CD4-positive, alpha-beta T cell (primary cell): ENCODE measurements at regions of chr17 and their contacts with region 1.

Region 1: DNA sequence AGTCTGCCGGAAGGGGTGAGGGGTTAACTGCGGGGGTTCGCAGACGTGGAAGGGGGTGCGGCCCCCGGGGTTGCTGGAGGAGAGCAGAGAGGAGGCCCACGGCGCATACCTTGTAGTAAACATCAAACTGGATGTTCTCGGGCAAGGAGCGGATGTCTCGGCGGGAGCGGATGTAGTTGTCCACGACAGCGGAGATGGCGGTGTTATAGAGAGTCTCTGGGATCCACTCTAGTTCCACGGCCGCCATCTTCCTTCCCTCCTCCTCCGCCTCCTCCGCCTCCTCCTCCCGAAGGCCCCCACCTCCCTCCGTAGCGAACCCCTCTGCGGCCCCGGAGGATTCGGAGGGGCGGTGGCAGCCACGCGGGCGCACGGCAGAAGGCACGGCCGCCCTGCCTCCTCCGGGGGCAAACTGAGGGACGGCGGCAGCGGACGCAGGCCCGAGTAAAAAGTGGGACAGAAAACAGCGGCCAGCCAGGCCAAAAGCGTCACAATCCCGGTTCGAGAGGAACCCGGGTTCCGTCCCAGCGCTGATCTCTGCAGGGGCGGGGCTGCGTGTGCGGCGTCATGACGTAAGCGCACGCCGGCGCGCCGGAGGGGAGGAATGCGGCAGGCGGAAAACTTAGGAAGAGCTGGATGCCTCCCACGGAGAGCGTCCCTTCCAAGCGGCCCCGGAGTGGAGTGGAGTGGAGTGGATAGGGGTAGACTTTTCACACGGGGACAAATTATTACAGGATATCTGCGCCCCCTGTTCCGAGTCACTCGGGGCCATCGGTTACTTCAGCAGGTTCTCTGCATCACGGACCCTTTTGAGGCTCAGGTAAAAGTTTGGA is at the start of gene APPBP2:
- DNase-seq: peak; percentile 47 to 89 (median 64)
- ATAC-seq: peak; percentile 84
- H3K4me3 ChIP-seq: peak within 1 kb of the TSS; percentile 93
- H3K4me3 Mint-ChIP-seq: peak within 1 kb of the TSS; percentile 99
- H3K27ac ChIP-seq: peak within 1 kb of the TSS; percentile 93 to 98
- H3K27ac Mint-ChIP-seq: peak within 1 kb of the TSS; percentile 98
- H3K4me1 ChIP-seq: peaks cover 15% of the 10 kb centered on the region
- H3K4me1 Mint-ChIP-seq: peaks cover 58% of the 10 kb centered on the region
- H3K27me3 ChIP-seq: no peaks in the 10 kb centered on the region
- H3K27me3 Mint-ChIP-seq: no peaks in the 10 kb centered on the region
- CTCF ChIP-seq: no peak
- total RNA-seq, gene APPBP2: 18.5 to 18.7 TPM

Region 2: DNA sequence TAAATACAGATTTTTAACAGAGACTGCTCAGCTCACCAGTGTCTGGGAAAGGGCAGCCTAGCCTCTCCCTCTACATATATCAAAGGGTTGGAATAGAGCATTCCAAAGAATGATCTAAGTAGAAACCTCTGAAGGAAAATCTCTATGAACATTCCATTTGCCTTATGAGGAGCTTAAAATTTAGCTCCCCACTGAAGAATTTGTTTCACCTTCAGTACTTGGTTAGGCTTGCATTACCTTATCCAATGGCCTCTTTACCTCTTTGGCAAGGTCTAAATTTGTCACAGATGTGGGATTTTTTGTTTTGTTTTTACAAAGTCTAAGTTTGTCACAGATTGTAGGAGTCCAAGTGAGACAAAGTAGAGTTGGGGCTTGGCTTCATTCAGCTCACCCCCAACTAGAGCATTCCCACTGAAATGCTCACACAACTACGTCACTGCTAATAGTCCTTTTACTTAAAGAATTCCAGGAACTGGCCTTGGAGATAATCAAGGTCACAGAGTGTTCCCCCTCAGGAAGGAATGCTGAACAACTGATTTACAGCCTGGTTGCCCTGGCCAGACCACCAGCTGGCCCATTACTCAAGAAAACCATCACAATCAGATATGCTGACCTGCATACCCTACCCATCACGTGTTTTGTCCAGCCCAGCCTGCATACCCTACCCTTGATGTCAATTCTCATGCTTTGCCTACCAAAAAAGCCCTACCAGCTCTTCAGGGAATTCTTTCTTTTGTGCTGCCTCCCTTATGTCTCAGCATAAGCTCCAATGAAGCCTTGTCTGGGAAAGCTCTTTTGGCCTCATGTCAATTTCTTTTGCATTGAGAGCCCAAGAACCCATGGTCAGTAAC is 47.5 kb after region 1 on chr17:
- CTCF ChIA-PET with region 1: interaction called, 3 read pairs
- POLR2A ChIA-PET with region 1: no interaction called
- intact Hi-C with region 1: loop called in 1 of 2 experiments (anchors 5 kb)
- DNase-seq: no peak
- ATAC-seq: no peak
- H3K4me3 ChIP-seq: no peak overlapping the region
- H3K4me3 Mint-ChIP-seq: no peak overlapping the region
- H3K27ac ChIP-seq: no peak overlapping the region
- H3K27ac Mint-ChIP-seq: no peak overlapping the region
- H3K4me1 ChIP-seq: peaks cover 2% of the 10 kb centered on the region
- H3K4me1 Mint-ChIP-seq: no peaks in the 10 kb centered on the region
- H3K27me3 ChIP-seq: no peaks in the 10 kb centered on the region
- H3K27me3 Mint-ChIP-seq: peaks cover 11% of the 10 kb centered on the region
- CTCF ChIP-seq: no peak

Region 3: GRCh38 chr17:60599620-60600489 is 74.0 kb after region 1 on chr17 and contains the start of gene PPM1D:
- CTCF ChIA-PET with region 1: interaction called, 4 read pairs
- POLR2A ChIA-PET with region 1: interaction called, 5 read pairs
- intact Hi-C with region 1: loop called (anchors 1 to 2 kb)
- DNase-seq: peak; percentile 95 to 100 (median 97)
- ATAC-seq: peak; percentile 95
- H3K4me3 ChIP-seq: peak within 1 kb of the TSS; percentile 87
- H3K4me3 Mint-ChIP-seq: peak within 1 kb of the TSS; percentile 98
- H3K27ac ChIP-seq: peak within 1 kb of the TSS; percentile 84 to 87
- H3K27ac Mint-ChIP-seq: peak within 1 kb of the TSS; percentile 94
- H3K4me1 ChIP-seq: peaks cover 23% of the 10 kb centered on the region
- H3K4me1 Mint-ChIP-seq: peaks cover 50% of the 10 kb centered on the region
- H3K27me3 ChIP-seq: no peaks in the 10 kb centered on the region
- H3K27me3 Mint-ChIP-seq: no peaks in the 10 kb centered on the region
- CTCF ChIP-seq: no peak
- total RNA-seq, gene PPM1D: 18.1 to 18.3 TPM

Region 4: DNA sequence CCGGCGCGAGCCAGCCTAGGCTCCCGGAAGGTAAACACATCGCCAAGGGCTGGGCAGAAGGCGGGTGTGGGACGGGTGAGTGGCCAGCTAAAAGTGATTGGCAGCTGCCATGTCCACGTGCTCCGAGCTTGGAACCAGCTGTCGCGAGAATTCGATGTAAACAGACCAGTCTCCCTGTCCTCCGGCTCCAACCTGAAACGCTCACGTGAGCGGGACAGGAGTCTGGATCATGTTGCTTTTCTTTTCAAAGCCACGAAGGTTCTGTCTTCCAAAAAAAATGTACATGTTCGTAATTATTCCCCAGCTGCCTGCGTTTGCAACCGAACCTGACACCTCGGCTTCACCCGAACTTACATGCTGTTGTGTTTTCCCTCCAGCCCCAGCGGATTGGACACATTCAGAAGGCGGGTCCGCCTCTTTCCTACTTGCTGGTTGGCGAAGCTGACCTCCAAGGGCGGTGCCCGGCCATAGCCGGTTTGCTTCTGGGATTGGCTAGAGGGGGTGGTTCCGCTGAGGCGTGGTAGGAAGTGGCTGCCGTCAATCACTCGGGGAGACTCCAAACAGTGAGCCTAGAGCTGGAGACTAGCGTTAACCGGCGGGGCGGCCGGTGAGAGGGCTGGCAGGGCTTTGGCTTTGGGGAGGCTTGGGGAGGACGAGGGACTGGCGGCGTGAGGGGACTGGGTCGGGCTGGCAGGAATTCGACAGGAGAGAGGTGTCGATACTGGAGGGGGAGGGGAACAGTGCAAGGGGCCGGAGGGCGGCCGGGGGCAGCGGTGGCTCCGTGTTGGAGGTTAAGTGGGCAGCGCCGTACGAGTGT is 151.6 kb after region 1 on chr17 and contains the start of gene BCAS3:
- CTCF ChIA-PET with region 1: no interaction called
- POLR2A ChIA-PET with region 1: interaction called, 17 read pairs
- intact Hi-C with region 1: loop called in 1 of 2 experiments (anchors 5 kb)
- DNase-seq: peak; percentile 92 to 98 (median 94)
- ATAC-seq: peak; percentile 96
- H3K4me3 ChIP-seq: peak within 1 kb of the TSS; percentile 66
- H3K4me3 Mint-ChIP-seq: peak within 1 kb of the TSS; percentile 97
- H3K27ac ChIP-seq: peak within 1 kb of the TSS; percentile 60 to 76
- H3K27ac Mint-ChIP-seq: peak within 1 kb of the TSS; percentile 93
- H3K4me1 ChIP-seq: peaks cover 13% of the 10 kb centered on the region
- H3K4me1 Mint-ChIP-seq: peaks cover 25% of the 10 kb centered on the region
- H3K27me3 ChIP-seq: no peaks in the 10 kb centered on the region
- H3K27me3 Mint-ChIP-seq: no peaks in the 10 kb centered on the region
- CTCF ChIP-seq: no peak
- total RNA-seq, gene BCAS3: 20.1 to 31.8 TPM

Region 5: GRCh38 chr17:61862975-61863800 is 1337.3 kb after region 1 on chr17 and contains the start of gene BRIP1:
- CTCF ChIA-PET with region 1: no interaction called
- POLR2A ChIA-PET with region 1: no interaction called
- intact Hi-C with region 1: loop called in 1 of 2 experiments (anchors 10 kb)
- DNase-seq: peak; percentile 73 to 94 (median 81)
- ATAC-seq: peak; percentile 96
- H3K4me3 ChIP-seq: peak within 1 kb of the TSS; percentile 77
- H3K4me3 Mint-ChIP-seq: peak within 1 kb of the TSS; percentile 90
- H3K27ac ChIP-seq: peak within 1 kb of the TSS; percentile 39 to 59
- H3K27ac Mint-ChIP-seq: peak within 1 kb of the TSS; percentile 87
- H3K4me1 ChIP-seq: peaks cover 8% of the 10 kb centered on the region
- H3K4me1 Mint-ChIP-seq: peaks cover 31% of the 10 kb centered on the region
- H3K27me3 ChIP-seq: no peaks in the 10 kb centered on the region
- H3K27me3 Mint-ChIP-seq: no peaks in the 10 kb centered on the region
- CTCF ChIP-seq: no peak
- total RNA-seq, gene BRIP1: 1.0 to 1.9 TPM